GM10248 (cell line): ENCODE measurements at regions of chr9 and their contacts with region 1.

Region 1: GRCh38 chr9:76419782-76420380 is 25.7 kb upstream of the RFK start:
- DNase-seq: peak; percentile 33
- CTCF ChIP-seq: peak; percentile 37

Region 2: GRCh38 chr9:76232861-76233489 is 186.9 kb before region 1 on chr9:
- CTCF ChIA-PET with region 1: no interaction called
- POLR2A ChIA-PET with region 1: no interaction called
- DNase-seq: no peak
- CTCF ChIP-seq: no peak

Region 3: GRCh38 chr9:76403352-76403751 is 16.5 kb before region 1 on chr9:
- CTCF ChIA-PET with region 1: interaction called, 15 read pairs
- POLR2A ChIA-PET with region 1: no interaction called
- DNase-seq: peak; percentile 48
- CTCF ChIP-seq: peak; percentile 50

Region 4: DNA sequence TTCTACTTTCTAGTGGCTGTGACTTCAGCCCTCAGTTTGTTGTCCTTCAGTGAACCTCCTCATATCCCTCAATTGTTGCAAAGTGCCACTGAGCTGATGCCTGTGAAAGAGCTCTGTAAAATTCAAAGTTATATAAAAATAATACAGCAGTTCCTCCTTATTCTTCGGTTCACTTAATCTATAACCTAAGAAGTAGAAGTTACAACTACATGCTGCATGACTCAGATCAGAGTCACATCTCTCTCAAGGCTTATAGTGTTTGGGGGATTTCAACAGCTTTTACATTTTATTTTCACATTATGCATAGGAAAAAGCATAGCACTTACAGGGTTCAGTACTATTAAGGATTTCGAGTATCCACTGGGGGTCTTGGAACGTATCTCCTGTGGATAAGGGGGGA is 14.0 kb after region 1 on chr9:
- CTCF ChIA-PET with region 1: interaction called, 12 read pairs
- POLR2A ChIA-PET with region 1: no interaction called
- DNase-seq: no peak
- CTCF ChIP-seq: no peak